ENCODE measurements at regions of chr10 and their contacts with region 1.

Region 1: GRCh38 chr10:101042667-101043355 is 11.8 kb downstream of the SFXN3 start:
- DNase-seq: peak; percentile 99
- ATAC-seq: peak; percentile 86
- H3K4me3 Mint-ChIP-seq: peak overlapping the region; percentile 94
- H3K27ac Mint-ChIP-seq: peak overlapping the region; percentile 92
- H3K4me1 Mint-ChIP-seq: peaks cover 33% of the 10 kb centered on the region
- H3K27me3 Mint-ChIP-seq: peaks cover 59% of the 10 kb centered on the region
- CTCF ChIP-seq: no peak

Region 2: GRCh38 chr10:101012525-101013364 is 30.1 kb before region 1 on chr10:
- CTCF ChIA-PET with region 1: interaction called, 83 read pairs
- POLR2A ChIA-PET with region 1: interaction called, 4 read pairs
- DNase-seq: peak; percentile 84
- ATAC-seq: peak; percentile 68
- H3K4me3 Mint-ChIP-seq: no peak overlapping the region
- H3K27ac Mint-ChIP-seq: no peak overlapping the region
- H3K4me1 Mint-ChIP-seq: peaks cover 33% of the 10 kb centered on the region
- H3K27me3 Mint-ChIP-seq: peaks cover 34% of the 10 kb centered on the region
- CTCF ChIP-seq: peak; percentile 63

Region 3: GRCh38 chr10:101031128-101031795 is 11.5 kb before region 1 on chr10 and contains the starts of genes PDZD7 and SFXN3:
- CTCF ChIA-PET with region 1: interaction called, 143 read pairs
- POLR2A ChIA-PET with region 1: interaction called, 10 read pairs
- DNase-seq: peak; percentile 97
- ATAC-seq: peak; percentile 88
- H3K4me3 Mint-ChIP-seq: peak within 1 kb of the TSS; percentile 75
- H3K27ac Mint-ChIP-seq: no peak within 1 kb of the TSS
- H3K4me1 Mint-ChIP-seq: peaks cover 36% of the 10 kb centered on the region
- H3K27me3 Mint-ChIP-seq: peaks cover 55% of the 10 kb centered on the region
- CTCF ChIP-seq: no peak
- total RNA-seq, gene PDZD7: 1.9 to 2.7 TPM (median 2.6 TPM) in 3 replicates
- total RNA-seq, gene SFXN3: 2.5 to 5.6 TPM (median 3.2 TPM) in 3 replicates

Region 4: DNA sequence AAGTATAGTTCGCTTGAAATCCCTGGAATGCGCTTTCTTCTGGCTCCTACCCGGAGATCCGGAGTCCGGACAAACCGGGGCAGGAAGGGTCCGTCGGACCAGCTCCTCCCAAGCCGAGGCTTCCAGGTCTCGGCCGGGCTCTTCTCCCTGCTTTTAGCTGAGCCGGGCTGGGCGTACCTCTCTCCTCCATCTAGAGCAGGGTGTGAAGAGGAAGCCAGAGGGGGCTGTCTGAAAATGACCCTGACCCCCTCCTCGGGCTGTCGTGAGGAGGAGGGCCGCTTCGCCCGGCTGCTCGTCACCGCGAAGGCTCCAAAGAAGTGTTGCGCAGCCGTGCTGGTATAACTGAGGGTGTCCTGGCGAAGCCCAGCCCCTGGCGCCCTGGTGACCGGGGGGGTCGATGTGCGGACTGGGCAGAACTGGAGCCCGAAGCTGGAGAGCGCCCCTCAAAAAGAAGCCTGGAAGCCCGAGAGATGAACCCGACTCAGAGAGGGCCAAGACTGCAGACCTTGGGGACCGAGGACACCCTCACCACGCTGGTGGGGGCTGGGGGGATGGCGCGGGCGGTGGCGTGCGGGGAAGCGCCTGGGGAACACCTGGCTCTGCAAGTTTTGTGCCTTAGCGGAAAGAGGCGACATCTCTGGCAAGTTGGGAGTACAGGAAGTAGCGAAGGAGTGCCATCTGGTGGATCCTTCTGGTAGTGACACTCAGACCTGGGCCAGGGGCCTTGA is 24.7 kb after region 1 on chr10:
- CTCF ChIA-PET with region 1: interaction called, 405 read pairs
- POLR2A ChIA-PET with region 1: interaction called, 5 read pairs
- DNase-seq: peak; percentile 89
- ATAC-seq: peak; percentile 26
- H3K4me3 Mint-ChIP-seq: peak overlapping the region; percentile 93
- H3K27ac Mint-ChIP-seq: no peak overlapping the region
- H3K4me1 Mint-ChIP-seq: peaks cover 42% of the 10 kb centered on the region
- H3K27me3 Mint-ChIP-seq: peaks cover 72% of the 10 kb centered on the region
- CTCF ChIP-seq: peak; percentile 68

Region 5: GRCh38 chr10:101161494-101162299 is 118.9 kb after region 1 on chr10:
- CTCF ChIA-PET with region 1: interaction called, 10 read pairs
- POLR2A ChIA-PET with region 1: no interaction called
- DNase-seq: peak; percentile 83
- ATAC-seq: peak; percentile 96
- H3K4me3 Mint-ChIP-seq: peak overlapping the region; percentile 55
- H3K27ac Mint-ChIP-seq: no peak overlapping the region; the same call in 1 of the 2 replicates
- H3K4me1 Mint-ChIP-seq: peaks cover 37% of the 10 kb centered on the region
- H3K27me3 Mint-ChIP-seq: peaks cover 52% of the 10 kb centered on the region
- CTCF ChIP-seq: peak; percentile 97

Region 6: DNA sequence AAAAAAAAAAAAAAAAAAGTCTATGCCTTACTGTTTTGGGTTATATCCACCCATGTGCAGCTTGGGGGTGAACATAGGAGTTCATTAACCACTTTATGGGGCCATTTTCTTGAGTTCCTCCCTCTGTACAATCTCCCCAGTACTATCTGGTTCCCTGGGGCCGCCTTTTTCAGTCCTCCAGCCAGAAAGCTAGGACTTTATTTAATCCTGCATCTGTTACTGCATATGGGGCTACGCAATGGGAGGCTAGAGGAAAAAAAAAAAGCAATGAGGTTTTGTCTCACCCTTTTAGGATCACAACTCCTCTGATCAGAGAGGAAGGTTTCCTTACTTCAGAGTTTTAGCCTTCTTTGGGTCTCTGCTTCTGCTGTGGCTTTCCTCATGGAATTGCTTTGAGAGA is 362.2 kb after region 1 on chr10:
- CTCF ChIA-PET with region 1: no interaction called
- POLR2A ChIA-PET with region 1: no interaction called
- DNase-seq: no peak
- ATAC-seq: no peak
- H3K4me3 Mint-ChIP-seq: no peak overlapping the region
- H3K27ac Mint-ChIP-seq: no peak overlapping the region
- H3K4me1 Mint-ChIP-seq: peaks cover 11% of the 10 kb centered on the region
- H3K27me3 Mint-ChIP-seq: no peaks in the 10 kb centered on the region
- CTCF ChIP-seq: no peak

Measured in WTC11 (cell line).